Cardiac septum (tissue), 1 donor: ENCODE measurements at regions of chr12 and their contacts with region 1.

Region 1: DNA sequence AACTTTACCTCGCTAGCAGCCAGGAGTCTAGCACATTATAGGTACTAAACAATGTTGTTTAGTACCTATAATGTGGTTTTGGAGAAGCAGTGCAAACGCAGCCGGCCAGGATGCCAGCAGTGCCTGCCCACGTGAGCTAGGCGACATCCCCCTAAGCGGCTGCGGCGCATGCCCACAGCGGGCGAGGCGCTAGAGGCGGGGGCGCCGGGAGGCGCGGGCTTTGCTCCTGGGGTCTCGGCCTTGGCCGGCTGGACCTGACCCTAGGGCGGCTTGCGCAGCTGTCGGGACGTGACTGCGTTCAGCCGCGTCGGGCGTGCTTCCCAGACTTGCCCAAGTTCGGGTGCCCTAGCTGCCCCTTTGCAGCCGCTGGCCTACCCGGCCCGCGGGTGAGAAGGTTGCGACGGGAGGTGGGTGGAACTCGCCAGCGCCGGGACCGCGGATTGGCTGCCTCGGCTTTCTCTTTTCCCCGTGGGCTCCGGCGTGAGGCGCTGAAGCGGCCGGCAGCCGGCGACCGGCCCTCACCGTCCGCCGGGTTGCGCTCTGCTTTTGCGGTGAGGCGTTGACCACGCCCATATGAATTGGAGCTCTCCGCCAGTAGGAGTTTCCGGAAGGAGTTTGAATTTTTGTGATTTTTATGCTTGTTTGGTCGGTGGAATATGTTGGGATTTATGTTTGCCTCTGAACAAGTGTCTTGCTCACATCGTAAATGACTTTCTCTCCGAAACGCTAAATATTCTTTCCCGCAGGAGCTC is at the start of gene TMEM19:
- DNase-seq: peak; percentile 97
- total RNA-seq, gene TMEM19: 24.1 TPM

Region 2: DNA sequence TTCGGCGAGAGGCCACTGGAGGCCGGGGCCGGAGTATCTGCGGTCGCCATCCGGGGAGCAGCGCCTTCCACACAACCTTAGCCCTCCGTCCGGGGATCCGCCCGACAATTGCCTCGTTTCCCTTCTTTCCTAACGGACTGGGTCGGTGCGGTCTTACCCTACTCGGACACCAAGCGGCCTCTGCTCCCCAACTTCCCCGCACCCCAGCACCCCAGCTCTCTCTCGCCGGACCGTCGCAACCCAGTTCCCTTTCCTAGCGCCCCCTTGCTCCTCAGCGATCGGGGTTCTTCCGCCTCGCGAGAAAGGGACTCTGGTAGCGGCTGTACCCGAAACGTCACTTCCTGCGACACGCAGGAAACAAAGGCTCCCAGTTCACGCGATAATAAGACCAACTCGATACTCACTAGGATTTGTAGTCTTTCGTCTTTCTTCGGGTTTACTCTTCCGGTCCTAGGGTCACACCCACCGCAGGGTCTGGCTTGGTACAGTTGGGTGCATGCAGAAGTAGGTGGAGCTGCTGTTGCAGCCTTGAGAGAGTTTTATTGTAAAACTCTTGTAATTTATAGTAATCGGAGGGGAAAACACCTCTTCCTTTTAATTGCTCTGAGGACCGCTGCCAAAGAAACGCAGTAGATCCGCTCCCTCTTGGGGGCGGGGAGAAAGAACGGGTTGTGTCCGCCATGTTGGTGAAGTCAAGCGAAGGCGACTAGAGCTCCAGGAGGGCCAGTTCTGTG is 22.4 kb before region 1 on chr12 and contains the start of gene ZFC3H1:
- intact Hi-C with region 1: loop called (anchors 1 kb)
- DNase-seq: peak; percentile 98
- total RNA-seq, gene ZFC3H1: 19.9 TPM

Region 3: GRCh38 chr12:71754461-71755145 is 68.5 kb after region 1 on chr12 and contains the start of gene RAB21:
- intact Hi-C with region 1: loop called (anchors 2 kb)
- DNase-seq: peak; percentile 100
- total RNA-seq, gene RAB21: 191 TPM

Region 4: GRCh38 chr12:71840231-71840847 is 154.2 kb after region 1 on chr12:
- intact Hi-C with region 1: loop called (anchors 10 kb)
- DNase-seq: no peak

Region 5: DNA sequence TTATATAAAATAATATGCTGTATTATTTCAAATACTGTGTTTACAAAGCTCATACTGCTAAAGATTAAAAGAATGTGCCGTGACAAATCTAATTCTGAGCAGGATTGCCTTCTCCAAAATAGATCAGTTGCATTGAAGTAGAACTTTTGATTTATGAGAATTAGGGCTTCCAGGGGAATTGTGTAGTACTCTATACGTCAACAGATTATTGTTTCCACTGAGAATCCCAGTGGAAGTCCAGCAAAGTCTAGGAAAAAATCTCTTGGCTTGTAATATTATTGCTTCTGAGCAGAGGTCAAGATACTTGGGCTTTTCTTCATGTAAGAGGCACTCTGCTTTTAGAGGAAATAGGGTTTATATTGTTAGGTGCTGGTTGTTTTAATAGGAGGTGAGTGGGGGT is 720.0 kb after region 1 on chr12:
- intact Hi-C with region 1: no loop called
- DNase-seq: no peak